Activated B cell treated with CpG ODN at 0.5 μM for 24 hours (primary cell): ENCODE measurements at regions of chr1 and their contacts with region 1.

Region 1: DNA sequence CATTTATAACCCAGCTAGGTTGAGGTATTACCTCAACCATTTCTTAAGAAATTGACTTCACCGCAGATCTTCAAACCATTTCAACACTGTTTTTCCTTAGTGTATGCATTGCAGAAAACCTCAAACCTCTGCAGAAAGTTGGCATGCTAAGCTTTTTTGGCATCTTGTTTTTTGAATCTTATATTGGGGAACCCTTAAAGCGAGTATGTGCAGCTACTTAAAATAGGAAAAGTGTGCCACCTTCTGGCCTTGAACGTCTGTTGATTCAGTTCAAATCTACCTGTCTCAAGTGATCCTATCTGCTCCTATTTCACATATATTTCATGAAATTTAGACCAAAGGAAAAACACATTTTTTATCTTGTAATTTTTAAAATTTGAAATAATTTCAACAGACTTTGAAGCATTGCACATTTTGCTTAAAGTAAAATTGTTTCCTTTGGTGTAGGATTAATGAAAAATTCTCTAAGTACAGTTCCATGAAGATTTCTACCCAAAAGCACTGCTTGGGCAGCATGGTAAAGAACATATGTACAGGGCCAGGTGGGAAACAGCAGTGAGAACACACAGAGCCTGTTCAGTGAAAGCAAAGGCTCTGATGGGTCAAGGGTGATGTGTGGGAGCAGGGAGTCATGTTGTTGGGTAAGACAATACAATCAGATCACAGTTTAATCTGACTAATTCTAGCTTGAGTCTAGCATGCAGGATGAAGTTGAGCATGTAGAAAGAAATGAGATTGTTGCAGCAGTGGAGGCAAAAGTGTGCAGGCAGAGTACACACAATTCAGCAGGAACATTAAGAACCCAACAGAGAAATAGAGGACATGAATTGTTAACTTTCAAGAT is 17.2 kb downstream of the HENMT1 start:
- DNase-seq: no peak
- ATAC-seq: peak; percentile 57
- H3K4me3 Mint-ChIP-seq: no peak overlapping the region
- H3K27ac Mint-ChIP-seq: no peak overlapping the region
- H3K4me1 Mint-ChIP-seq: peaks cover 19% of the 10 kb centered on the region
- H3K27me3 Mint-ChIP-seq: no peaks in the 10 kb centered on the region
- CTCF ChIP-seq: no peak

Region 2: DNA sequence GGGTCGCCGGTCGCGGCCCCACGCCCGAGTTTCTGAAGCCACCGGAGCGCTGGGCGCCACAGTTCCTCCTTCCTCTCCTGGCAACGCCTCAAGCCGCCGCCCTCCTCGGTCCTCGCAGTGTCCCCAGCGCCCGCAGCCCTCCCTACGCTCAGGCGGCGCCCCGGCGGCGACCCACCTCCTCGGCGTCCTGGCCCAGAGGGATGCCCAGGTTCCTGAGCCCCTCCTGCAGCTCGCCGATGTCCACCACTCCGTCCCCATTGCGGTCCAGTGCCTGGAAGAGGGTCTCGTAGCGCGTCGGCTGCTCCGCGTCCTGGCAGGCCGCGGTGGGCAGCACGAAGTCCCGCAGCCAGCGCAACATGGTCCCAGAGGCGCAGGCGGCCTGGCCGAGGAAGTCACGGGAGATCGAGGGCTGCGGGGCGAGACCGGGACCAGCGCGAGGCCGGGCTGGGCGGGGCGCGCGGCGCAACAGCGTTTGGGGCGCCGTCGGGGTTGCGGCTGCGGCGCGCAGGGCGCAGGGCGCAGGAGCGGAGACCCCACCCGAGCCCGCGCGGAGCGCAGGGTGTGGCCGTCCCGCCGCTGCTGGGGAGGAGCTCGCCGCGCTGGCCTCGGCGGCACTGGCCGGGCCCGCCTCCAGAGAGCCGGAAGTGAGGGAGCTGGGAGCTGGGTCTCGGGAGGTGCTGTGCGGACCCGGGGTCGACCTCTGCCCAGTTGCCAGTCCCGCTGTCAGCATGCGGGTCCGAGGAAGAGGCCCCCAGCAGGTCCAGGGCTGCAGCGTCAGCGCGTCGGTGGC is 443.7 kb before region 1 on chr1 and contains the start of gene SLC25A24:
- CTCF ChIA-PET with region 1: no interaction called
- POLR2A ChIA-PET with region 1: no interaction called
- intact Hi-C with region 1: loop called (anchors 5 kb)
- DNase-seq: peak; percentile 85
- ATAC-seq: peak; percentile 94
- H3K4me3 Mint-ChIP-seq: peak within 1 kb of the TSS; percentile 93
- H3K27ac Mint-ChIP-seq: peak within 1 kb of the TSS; percentile 86
- H3K4me1 Mint-ChIP-seq: peaks cover 29% of the 10 kb centered on the region
- H3K27me3 Mint-ChIP-seq: no peaks in the 10 kb centered on the region
- CTCF ChIP-seq: no peak
- total RNA-seq, gene SLC25A24: 20.2 and 22.1 TPM in 2 replicates

Region 3: DNA sequence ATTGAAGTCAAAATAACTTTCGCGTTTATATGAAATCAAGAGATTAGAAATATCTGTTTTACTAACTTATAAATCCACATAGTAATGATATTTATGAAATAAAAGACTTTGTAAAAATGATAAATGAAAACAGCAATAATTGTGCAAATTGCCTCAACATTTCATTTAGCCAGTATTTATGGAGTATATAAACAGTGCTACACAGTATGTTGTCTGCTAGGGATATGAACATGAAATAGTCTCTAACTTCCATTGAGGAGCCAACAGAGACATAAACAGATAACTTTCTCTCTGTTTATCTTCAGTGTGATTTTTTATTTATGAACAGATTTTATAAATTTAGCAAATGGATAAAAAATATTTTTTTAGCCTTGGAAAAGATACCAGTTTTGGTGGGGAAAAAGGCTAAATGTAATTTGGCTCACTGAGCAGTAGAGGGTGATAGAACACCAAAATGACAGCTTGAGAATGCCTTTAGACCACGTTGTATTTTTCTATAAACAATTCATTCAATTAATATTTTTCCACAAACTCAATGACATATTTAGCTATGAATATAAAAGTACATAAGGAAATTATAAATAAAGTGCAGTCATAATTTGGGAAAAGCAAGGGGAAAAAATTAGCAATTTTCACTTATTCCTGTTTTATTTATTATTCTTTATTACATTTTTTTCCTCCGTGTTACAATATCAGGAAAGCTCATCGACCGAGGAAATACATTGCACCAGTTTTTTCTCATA is 131.3 kb before region 1 on chr1:
- CTCF ChIA-PET with region 1: interaction called, 32 read pairs
- POLR2A ChIA-PET with region 1: no interaction called
- intact Hi-C with region 1: loop called (anchors 1 kb)
- DNase-seq: no peak
- ATAC-seq: peak; percentile 85
- H3K4me3 Mint-ChIP-seq: no peak overlapping the region
- H3K27ac Mint-ChIP-seq: no peak overlapping the region
- H3K4me1 Mint-ChIP-seq: no peaks in the 10 kb centered on the region
- H3K27me3 Mint-ChIP-seq: no peaks in the 10 kb centered on the region
- CTCF ChIP-seq: peak; percentile 95

Region 4: DNA sequence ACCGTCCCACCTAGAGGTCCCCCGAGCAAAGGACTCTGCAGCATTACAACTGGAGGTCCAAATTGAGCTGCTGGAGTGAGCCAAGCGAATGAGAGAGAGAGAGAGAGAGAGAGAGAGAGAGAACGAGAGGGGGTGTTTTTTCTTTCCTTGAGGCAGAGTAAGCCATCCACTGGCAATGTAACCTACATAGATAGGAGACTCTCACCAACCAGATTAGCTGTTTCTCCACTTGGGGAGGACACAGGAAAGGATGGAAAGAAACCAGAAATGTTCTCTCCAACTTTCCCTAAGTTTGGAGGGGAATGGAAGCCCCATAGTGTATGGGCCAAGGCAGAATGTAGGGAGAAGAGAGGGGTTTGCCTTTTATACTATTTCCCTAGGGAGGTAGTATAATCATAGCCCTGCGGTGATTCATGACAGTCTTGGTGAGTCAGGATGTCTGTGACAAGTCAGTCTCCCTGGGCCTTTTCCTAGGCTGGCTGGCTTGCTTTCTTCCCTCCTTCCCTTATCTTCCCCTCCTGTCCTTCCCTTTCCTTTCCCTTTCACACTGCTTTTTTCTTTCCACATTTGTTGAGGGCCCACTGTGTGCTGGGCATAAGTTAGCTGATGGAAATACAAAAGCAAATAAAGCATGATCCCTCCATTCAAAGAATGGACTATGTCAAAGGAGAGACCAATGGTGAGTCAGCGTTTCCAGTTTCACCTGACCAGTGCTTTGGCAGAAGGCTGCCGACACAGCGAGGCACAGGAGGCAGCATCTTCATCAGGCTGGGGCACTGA is 76.1 kb after region 1 on chr1:
- CTCF ChIA-PET with region 1: no interaction called
- POLR2A ChIA-PET with region 1: no interaction called
- intact Hi-C with region 1: no loop called
- DNase-seq: no peak
- ATAC-seq: peak; percentile 49
- H3K4me3 Mint-ChIP-seq: no peak overlapping the region
- H3K27ac Mint-ChIP-seq: no peak overlapping the region
- H3K4me1 Mint-ChIP-seq: no peaks in the 10 kb centered on the region
- H3K27me3 Mint-ChIP-seq: peaks cover 14% of the 10 kb centered on the region
- CTCF ChIP-seq: no peak